RWPE1 (cell line): ENCODE measurements at regions of chr6 and their contacts with region 1.

Region 1: DNA sequence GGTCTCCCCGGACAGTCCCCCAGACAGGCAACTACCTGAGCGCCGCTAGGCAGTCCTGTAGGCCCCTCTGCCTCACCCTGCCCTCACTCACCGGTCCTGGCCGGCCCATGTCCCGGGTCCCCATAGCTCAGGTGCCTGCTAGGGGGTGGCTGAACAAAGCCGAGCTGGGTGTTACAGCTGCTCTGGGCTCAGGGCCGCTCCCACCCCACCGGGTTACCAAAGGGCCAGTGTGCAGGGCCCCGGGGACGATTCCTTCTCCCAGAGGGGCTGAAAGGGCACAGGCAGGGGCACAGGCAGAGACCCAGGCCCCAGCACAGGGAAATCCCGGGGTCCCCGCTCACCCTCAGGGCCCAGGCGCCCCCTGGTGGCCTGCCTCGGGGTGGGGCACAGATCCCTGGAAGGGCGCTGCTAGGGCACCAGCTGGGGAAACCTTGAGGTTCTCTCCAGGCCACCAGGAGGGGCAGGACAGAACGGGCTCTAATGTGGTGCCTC is 118.4 kb downstream of the GRM4 start:
- DNase-seq: peak; percentile 52
- H3K27ac ChIP-seq: no peak overlapping the region
- CTCF ChIP-seq: peak; percentile 76

Region 2: GRCh38 chr6:33771146-33772081 is 256.1 kb before region 1 on chr6:
- CTCF ChIA-PET with region 1: interaction called, 41 read pairs
- POLR2A ChIA-PET with region 1: no interaction called
- DNase-seq: peak; percentile 69
- H3K27ac ChIP-seq: peak overlapping the region; percentile 94
- CTCF ChIP-seq: peak; percentile 94

Region 3: DNA sequence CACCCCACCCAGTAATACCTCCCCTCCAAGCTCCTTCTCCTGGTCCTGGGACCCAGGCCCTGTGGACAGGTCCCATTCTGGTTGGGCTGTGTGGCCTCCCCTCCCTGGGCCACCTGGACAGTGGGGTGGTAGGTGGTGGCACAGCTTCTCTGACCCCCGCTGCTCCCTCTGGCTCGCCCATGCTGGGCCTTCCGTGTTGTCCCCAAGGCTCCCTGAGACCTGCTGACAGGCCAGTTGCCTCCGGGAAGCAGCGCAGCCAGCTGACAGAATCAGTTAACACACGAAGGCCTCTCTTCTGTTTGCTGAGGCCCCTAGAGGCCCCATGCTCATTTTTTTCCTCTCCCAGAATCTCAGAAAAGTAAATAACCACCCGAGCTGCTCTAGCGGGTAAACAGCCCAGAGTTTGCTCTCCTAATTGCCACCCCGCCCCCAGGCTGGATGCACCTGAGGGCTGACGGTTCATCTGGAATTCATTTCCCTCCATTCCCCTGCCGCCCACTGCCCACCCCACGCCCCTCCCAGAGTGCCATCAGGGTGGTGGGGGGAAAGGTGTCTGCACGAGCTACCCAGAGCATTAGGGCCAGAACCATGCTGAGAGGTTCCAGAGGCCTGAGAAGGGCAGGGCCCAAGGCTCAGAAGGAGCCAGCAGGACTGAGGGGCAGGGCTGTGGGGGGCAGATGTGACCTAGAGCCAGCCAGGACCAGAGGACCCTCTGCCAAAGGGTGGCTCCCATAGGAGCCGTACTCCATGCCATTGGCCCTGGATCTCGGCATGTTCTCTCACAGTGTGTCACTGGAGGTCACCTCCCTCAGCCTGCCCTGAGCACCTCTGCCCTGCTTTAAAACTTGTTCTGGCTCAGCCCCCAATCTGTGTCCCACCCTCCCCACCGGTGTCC is 39.1 kb before region 1 on chr6:
- CTCF ChIA-PET with region 1: no interaction called
- POLR2A ChIA-PET with region 1: no interaction called
- DNase-seq: no peak
- H3K27ac ChIP-seq: no peak overlapping the region
- CTCF ChIP-seq: no peak